Kidney (tissue), 22 donors: ENCODE measurements at regions of chr3 and their contacts with region 1.

Region 1: GRCh38 chr3:16177962-16178627 is 3.6 kb downstream of the GALNT15 start:
- DNase-seq: peak; percentile 83 to 91 (median 84)
- H3K4me3 ChIP-seq: peak overlapping the region; percentile 15 to 32 (median 17)
- H3K27ac ChIP-seq: no peak overlapping the region
- H3K4me1 ChIP-seq: peaks cover 0 to 8% (median 3%) of the 10 kb centered on the region in 3 donors
- H3K27me3 ChIP-seq: no peaks in the 10 kb centered on the region
- CTCF ChIP-seq: peak; percentile 96

Region 2: GRCh38 chr3:16048435-16049318 is 129.4 kb before region 1 on chr3:
- intact Hi-C with region 1: loop called (anchors 5 kb)
- DNase-seq: peak in 3 of 5 donors; percentile 33 to 82 (median 60)
- H3K4me3 ChIP-seq: peak overlapping the region in 2 of 3 donors; percentile 42 to 59
- H3K27ac ChIP-seq: no peak overlapping the region
- H3K4me1 ChIP-seq: peaks cover 0 to 6% (median 0%) of the 10 kb centered on the region in 3 donors
- H3K27me3 ChIP-seq: no peaks in the 10 kb centered on the region
- CTCF ChIP-seq: peak; percentile 73

Region 3: GRCh38 chr3:16309558-16309957 is 131.5 kb after region 1 on chr3:
- intact Hi-C with region 1: no loop called
- DNase-seq: no peak
- H3K4me3 ChIP-seq: no peak overlapping the region
- H3K27ac ChIP-seq: no peak overlapping the region
- H3K4me1 ChIP-seq: peaks cover 0 to 10% (median 2%) of the 10 kb centered on the region in 3 donors
- H3K27me3 ChIP-seq: no peaks in the 10 kb centered on the region
- CTCF ChIP-seq: no peak